Ascending aorta (tissue), 2 donors: ENCODE measurements at regions of chr9 and their contacts with region 1.

Region 1: DNA sequence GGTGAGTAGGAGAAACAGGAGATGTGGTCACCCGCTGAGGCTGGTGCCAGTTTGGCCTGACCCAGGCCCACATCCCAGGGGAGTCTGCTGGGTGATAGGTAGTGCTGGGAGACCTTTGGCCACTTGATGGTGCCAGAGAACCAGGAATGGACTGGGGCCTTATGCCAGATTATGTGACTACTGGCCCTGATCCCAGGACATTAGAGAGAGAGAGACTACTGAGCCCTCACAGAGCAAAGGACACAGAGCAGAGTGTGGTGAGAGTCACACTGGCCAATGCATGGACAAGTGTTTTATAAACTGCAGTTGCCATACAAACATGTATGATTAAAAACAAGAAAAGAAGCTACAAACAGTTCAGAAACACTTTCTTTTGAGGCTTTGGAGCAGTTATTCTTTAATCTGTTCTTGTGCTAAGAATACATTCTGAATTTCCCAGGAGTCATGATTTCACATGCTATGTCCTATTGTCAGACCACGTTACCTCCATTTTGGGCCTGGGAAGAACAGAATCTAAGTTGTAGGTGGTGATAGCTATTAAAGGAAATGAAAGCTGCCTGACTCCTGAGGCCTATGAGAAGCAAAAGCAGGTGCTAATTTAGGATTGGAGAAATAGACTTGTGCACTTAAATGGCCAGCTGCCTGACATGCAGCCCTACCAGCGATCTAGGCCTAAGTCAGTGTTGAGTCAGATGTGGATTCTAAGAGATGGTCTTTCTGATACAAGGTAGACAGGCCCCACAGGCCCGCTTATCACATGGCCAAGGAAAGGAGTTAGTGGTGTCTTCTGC is 32.6 kb upstream of the TMOD1 start:
- DNase-seq: peak; percentile 29 to 95
- H3K4me3 ChIP-seq: no peak overlapping the region
- H3K27ac ChIP-seq: peak overlapping the region; percentile 73 to 78
- H3K4me1 ChIP-seq: peaks cover 3 to 10% of the 10 kb centered on the region in 2 donors
- H3K27me3 ChIP-seq: no peaks in the 10 kb centered on the region
- CTCF ChIP-seq: peak; percentile 80 to 91 (median 85)

Region 2: DNA sequence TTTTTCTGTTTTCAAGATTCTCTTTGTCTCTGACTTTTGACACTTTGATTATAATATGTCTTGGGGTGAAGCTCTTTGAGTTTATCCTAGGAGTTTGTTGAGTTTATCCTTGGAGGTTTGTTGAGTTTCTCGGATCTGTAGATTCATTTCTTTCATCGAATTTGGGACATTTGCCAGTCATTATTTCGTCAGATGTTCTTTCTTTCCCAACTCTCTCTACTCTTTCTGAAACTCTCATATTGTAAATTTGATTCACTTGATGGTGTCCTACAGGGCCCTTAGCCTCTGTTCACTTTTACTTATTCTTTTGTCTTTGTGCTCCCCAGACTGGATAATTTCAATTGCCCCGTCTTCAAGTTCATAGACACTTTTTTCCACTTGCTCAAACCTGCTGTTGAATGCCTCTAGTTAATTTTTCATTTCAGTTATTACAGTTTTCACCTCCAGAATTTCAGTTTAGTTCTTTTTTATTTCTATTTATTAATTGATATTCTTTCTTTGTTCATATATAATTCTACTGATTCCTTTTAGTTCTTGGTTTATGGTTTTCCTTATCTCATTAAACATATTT is 65.0 kb before region 1 on chr9:
- intact Hi-C with region 1: no loop called
- DNase-seq: no peak
- H3K4me3 ChIP-seq: no peak overlapping the region
- H3K27ac ChIP-seq: no peak overlapping the region
- H3K4me1 ChIP-seq: no peaks in the 10 kb centered on the region
- H3K27me3 ChIP-seq: no peaks in the 10 kb centered on the region
- CTCF ChIP-seq: no peak

Region 3: DNA sequence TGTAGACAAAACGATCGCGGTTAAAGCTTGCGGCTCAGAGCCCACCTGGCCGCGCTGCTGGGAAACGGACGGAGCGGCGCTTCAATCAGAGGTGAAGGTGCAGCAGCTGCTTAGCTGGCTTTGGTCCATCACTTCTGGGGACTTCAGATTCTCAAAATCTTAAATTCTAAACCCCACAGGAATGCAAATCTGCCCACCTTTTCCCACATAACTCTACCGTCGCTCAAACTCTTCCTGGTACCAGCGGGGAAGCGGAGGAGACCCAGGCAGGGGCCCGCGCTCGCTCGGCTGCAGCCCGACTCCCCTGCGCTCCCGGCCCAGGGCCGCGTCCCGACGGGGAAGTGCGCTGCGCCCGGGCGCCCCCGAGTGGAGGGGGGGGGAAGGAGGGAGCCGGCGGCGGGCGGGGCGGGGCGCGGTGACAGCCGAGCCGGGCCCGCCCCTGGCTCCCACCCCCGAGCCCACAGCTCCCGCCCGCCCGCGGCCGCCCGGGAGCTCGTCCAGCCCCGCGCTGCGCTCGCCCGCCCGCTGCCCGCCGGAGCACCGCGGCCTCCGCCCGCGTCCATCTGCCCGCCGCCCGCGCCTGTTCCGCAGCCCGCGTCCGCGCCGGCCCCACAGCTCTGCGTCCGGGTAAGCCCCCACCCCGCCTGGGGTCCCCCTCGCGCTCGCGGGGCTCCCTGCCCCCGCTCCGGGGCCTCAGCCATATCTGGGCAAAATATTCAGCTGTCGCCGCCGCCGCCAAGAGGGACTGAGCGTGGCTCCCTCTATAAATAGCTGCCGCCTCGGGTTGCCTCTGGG is 32.5 kb after region 1 on chr9 and contains the start of gene TMOD1:
- intact Hi-C with region 1: loop called (anchors 2 kb)
- DNase-seq: peak in 1 of 2 donors; percentile 86
- H3K4me3 ChIP-seq: peak within 1 kb of the TSS; percentile 84 to 99
- H3K27ac ChIP-seq: peak within 1 kb of the TSS; percentile 88 to 91
- H3K4me1 ChIP-seq: peaks cover 0 to 30% of the 10 kb centered on the region in 2 donors
- H3K27me3 ChIP-seq: no peaks in the 10 kb centered on the region
- CTCF ChIP-seq: peak in 2 of 3 experiments; percentile 28 to 35
- total RNA-seq, gene TMOD1: 17.1 TPM

Region 4: DNA sequence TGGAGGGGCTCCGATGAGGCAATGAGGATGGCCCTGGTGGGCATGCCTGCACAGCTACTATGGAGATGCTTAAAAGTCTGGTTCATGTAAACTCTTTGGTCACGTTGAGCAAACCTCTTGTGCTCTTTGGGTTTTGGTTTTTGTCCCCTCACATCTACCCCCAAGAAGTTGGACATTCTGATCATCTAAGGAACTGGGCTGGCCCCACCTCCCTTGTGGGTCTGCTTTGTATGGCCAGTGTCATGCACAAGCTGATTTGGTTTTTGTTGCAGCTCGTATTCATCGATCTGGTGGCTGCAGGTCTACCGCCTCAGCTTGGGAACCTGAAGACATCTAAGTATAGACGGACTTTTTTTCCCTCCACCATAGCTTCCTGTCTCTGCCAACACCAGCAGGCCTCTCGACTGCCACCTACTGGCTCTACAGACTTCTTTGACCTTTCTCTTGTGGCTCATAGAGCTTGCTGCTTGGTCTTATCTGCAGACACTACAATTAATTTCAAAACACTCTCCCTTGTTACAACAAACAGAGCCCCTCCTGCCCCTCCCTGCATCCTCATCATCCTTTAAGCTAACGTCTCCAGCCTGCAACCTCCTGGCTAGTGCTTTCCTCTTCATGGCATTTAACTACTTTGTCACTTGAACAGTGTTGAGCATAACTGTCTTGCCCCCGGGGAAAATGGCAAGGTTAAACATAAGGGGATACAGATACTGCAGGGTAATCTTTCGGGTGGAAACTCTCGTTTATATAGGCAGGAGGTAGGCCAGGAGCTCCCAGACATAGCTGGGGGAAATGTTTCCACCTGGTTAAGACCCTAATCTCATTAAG is 129.8 kb after region 1 on chr9:
- intact Hi-C with region 1: loop called (anchors 1 kb)
- DNase-seq: peak in 1 of 2 donors; percentile 89
- H3K4me3 ChIP-seq: peak overlapping the region in 1 of 2 donors; percentile 4
- H3K27ac ChIP-seq: peak overlapping the region in 1 of 2 donors; percentile 29
- H3K4me1 ChIP-seq: peaks cover 6 to 19% of the 10 kb centered on the region in 2 donors
- H3K27me3 ChIP-seq: no peaks in the 10 kb centered on the region
- CTCF ChIP-seq: peak; percentile 66 to 78 (median 71)

Region 5: DNA sequence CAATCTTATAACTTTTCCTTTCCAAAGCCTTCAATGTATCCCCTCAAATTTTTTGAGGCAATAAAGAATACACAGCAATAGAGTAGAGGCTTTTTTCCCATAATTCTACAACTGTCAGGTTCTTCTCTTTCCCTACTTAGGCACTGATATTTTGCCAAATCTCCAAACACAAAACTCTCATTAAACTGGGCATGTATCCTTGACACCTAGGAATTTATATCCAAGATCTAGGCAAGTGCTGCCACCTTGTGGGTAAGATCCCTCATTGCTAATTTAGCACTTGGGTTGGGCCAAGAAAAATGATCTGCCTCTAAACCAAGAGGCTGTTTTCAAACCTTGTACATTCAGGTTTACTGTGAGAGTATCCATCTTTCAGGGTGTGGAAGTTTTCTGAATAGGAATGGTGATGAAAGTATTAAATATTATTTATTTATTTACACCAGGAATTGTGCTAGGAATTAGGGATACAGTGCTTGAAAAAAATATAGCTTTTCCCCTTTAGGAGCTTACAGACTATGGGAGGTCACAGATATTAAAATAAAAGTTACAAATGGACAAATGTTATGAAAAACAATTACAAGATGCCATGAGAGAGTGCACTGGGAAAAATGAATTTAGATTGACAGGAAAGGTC is 146.7 kb after region 1 on chr9:
- intact Hi-C with region 1: loop called (anchors 1 kb)
- DNase-seq: peak in 1 of 2 donors; percentile 76
- H3K4me3 ChIP-seq: no peak overlapping the region
- H3K27ac ChIP-seq: no peak overlapping the region
- H3K4me1 ChIP-seq: peaks cover 0 to 4% of the 10 kb centered on the region in 2 donors
- H3K27me3 ChIP-seq: no peaks in the 10 kb centered on the region
- CTCF ChIP-seq: peak; percentile 79 to 83 (median 79)